Heart left ventricle (tissue), 16 donors: ENCODE measurements at regions of chr3 and their contacts with region 1.

Region 1: DNA sequence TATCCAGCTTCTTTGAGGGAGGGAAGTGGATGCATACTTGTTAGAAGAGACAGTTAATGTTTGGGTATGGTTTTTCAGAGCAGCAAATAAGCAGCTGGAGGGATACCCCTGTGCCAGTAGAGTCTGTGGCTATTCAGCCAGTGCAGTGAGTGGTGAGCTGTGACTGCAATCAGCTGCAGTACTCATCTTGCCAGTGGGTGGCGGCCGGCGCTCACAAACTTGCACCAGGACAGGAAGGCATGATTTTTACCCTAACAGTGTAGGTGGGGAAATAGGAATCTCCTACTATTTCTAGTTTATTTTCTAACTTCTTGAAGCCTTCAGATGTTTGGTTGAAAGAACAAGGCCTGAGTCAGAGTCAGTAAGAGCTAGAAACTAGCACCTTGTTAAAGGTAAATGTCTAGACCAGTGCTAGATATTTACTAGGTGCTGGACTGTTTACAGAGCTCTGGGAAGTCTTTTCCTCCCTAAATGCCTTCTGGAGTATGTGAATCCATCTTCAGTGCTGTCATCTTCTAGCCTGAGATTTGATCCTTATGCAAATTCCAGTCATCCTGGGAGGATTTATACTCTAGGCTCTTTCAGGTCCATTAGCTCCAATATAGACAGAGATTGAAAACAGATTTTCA is 23.6 kb downstream of the TIMP4 start:
- DNase-seq: peak; percentile 58 to 86 (median 72)
- ATAC-seq: peak; percentile 65 to 90 (median 86)
- H3K4me3 ChIP-seq: no peak overlapping the region
- H3K27ac ChIP-seq: no peak overlapping the region
- H3K4me1 ChIP-seq: peaks cover 0 to 25% (median 14%) of the 10 kb centered on the region in 12 donors
- H3K27me3 ChIP-seq: peaks cover 0 to 18% (median 0%) of the 10 kb centered on the region in 9 donors
- CTCF ChIP-seq: peak; percentile 82 to 94 (median 90)
- POLR2A ChIP-seq: no peak

Region 2: DNA sequence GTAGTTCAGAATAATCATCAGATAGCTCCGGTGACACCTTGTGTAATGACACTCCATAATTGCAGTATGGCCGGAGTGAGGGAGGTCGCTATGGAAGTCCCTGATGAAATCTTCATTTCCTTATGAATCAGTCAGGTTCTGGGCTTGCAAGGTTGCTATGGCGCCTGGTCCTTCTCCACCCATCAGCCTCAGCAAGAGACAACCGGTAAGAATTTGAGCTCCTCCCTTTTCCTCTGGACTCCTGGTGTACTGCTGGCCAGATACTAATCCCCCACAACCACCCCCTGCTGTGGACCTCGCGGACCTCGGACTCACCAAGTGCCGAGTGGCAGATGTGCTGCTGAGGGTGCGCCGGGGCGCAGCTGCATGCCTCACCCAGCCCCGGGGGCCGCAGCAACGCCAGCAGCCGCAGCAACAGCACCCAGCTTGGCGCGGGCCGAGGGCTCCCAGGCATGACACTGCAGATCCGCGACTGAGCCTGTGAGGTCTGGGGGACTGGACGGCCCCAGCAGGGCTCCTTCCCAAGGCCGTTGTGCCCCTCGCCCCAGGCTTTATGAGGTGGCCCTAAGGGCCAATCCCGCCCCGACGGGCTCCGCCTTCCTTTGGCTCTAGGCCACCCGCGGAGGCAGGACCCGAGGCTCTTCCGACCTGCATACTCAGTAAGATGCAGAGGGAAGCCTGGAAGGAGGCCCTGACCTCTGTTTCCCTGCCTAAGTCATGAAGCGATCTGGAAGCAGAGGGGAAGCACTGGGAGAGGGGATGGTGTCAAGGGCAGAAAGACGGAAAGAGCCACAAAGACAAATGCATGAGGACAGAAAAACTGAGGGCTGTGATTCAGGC is 23.5 kb after region 1 on chr3 and contains the start of gene TIMP4:
- intact Hi-C with region 1: loop called in 1 of 10 experiments (anchors 2 kb)
- DNase-seq: peak; percentile 36 to 78 (median 64)
- ATAC-seq: peak; percentile 78 to 84 (median 83)
- H3K4me3 ChIP-seq: peak within 1 kb of the TSS; percentile 9 to 70 (median 60)
- H3K27ac ChIP-seq: peak within 1 kb of the TSS; percentile 44 to 91 (median 82)
- H3K4me1 ChIP-seq: peaks cover 3 to 42% (median 25%) of the 10 kb centered on the region in 12 donors
- H3K27me3 ChIP-seq: peaks cover 0 to 10% (median 0%) of the 10 kb centered on the region in 9 donors
- CTCF ChIP-seq: no peak
- POLR2A ChIP-seq: peak in 1 of 2 donors; percentile 77
- total RNA-seq, gene TIMP4: 3.0 to 57.9 (median 18.6) TPM

Region 3: DNA sequence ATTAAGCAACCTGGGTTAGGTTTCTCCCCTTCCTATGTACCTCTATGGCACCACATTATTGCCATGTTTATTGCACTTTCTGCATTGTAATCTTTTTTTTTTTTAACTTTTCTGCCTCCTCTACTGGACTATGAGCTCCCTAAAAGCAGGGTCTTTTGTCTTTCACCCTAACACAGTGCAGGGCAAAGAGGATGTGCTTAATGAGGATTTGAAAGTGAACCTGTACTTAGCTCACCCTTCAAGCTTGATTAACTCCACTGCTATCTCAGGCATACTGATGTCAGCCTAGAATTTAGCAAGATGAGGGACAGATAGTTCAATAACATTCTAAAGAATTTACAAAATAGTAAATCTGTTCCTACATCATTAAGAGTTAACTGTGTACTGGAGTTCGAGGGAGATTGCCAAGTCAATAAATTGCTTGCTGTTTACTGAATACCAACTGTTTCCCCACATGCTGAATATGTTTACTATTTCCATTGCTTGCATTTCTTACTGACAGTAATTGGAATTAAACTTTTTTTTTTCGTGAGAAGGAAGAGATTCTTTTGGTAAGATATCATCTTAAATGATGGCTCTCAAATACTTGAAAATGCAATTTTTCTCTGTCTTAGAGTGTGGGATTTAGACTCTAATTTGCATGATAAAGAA is 138.0 kb after region 1 on chr3:
- intact Hi-C with region 1: loop called in 1 of 10 experiments (anchors 10 kb)
- DNase-seq: no peak
- ATAC-seq: no peak
- H3K4me3 ChIP-seq: no peak overlapping the region
- H3K27ac ChIP-seq: no peak overlapping the region
- H3K4me1 ChIP-seq: peaks cover 0 to 9% (median 0%) of the 10 kb centered on the region in 12 donors
- H3K27me3 ChIP-seq: no peaks in the 10 kb centered on the region
- CTCF ChIP-seq: no peak
- POLR2A ChIP-seq: no peak

Region 4: DNA sequence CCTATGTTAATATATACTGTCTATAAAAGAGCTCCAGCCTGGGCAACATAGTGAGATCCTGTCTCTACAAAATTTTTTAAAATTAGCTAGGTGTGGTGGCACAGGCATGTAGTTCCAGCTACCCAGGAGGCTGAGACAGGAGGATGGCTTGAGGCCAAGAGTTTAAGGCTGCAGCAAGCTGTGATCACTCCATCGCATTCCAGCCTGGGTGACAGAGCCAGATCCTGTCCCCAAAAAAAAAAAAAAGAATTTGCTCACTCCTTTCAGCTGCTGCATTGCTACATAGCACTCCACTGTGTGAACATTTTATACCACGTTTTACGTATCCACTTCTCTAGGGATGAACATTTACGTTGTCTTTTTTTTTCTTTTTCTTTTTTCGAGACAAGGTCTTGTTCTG is 343.2 kb after region 1 on chr3:
- intact Hi-C with region 1: loop called (anchors 1 to 2 kb)
- DNase-seq: no peak
- ATAC-seq: no peak
- H3K4me3 ChIP-seq: no peak overlapping the region
- H3K27ac ChIP-seq: no peak overlapping the region
- H3K4me1 ChIP-seq: peaks cover 0 to 30% (median 9%) of the 10 kb centered on the region in 12 donors
- H3K27me3 ChIP-seq: no peaks in the 10 kb centered on the region
- CTCF ChIP-seq: no peak
- POLR2A ChIP-seq: no peak

Region 5: GRCh38 chr3:12719984-12720898 is 585.1 kb after region 1 on chr3:
- intact Hi-C with region 1: loop called in 7 of 10 experiments (anchors 5 to 10 kb)
- DNase-seq: peak; percentile 70 to 82 (median 81)
- ATAC-seq: peak; percentile 92 to 98 (median 96)
- H3K4me3 ChIP-seq: peak overlapping the region in 10 of 12 donors; percentile 10 to 54 (median 40)
- H3K27ac ChIP-seq: peak overlapping the region in 6 of 12 donors; percentile 9 to 60 (median 32)
- H3K4me1 ChIP-seq: peaks cover 0 to 16% (median 4%) of the 10 kb centered on the region in 12 donors
- H3K27me3 ChIP-seq: no peaks in the 10 kb centered on the region
- CTCF ChIP-seq: peak; percentile 80 to 98 (median 90)
- POLR2A ChIP-seq: no peak